Caco-2 (cell line): ENCODE measurements at regions of chr6 and their contacts with region 1.

Region 1: DNA sequence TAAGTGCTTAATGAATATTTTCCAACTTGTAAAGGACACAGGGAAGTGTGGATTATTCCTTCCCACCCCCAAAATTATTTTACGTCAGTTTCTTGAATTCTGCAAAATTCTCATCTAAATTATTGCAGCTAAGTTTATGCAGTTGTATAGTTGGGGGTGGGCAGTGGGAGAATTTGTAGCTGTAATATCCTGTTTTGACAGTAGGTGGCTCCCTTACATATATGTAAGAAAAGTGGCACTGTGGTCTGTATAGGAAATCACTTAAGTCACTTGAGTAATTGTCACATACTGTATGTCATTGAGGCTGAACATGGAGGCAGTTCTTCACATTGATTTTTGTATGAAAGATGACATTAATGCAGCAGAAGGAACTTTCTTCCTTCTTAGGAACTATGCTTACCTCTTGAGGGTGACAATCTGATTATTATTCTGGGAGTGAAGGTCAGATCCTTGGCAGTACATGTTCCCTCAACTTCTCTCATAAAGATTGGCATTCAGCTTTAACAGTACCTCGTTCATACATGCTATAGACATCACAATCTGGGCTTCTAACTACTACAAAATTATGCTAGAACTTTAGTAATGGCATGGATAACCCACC is 14.7 kb upstream of the CFAP206 start:
- DNase-seq: peak in 1 of 2 experiments; percentile 52
- H3K4me3 ChIP-seq: no peak overlapping the region
- H3K4me3 Mint-ChIP-seq: no peak overlapping the region
- H3K27ac Mint-ChIP-seq: no peak overlapping the region
- H3K4me1 ChIP-seq: no peaks in the 10 kb centered on the region
- H3K4me1 Mint-ChIP-seq: no peaks in the 10 kb centered on the region
- H3K27me3 ChIP-seq: no peaks in the 10 kb centered on the region
- H3K27me3 Mint-ChIP-seq: no peaks in the 10 kb centered on the region
- CTCF ChIP-seq: peak; percentile 63 to 64

Region 2: GRCh38 chr6:87139236-87139635 is 253.9 kb before region 1 on chr6:
- CTCF ChIA-PET with region 1: interaction called, 5 read pairs
- POLR2A ChIA-PET with region 1: no interaction called
- intact Hi-C with region 1: loop called (anchors 1 kb)
- DNase-seq: peak in 1 of 2 experiments; percentile 60
- H3K4me3 ChIP-seq: no peak overlapping the region
- H3K4me3 Mint-ChIP-seq: no peak overlapping the region
- H3K27ac Mint-ChIP-seq: no peak overlapping the region
- H3K4me1 ChIP-seq: no peaks in the 10 kb centered on the region
- H3K4me1 Mint-ChIP-seq: no peaks in the 10 kb centered on the region
- H3K27me3 ChIP-seq: no peaks in the 10 kb centered on the region
- H3K27me3 Mint-ChIP-seq: peaks cover 13% of the 10 kb centered on the region
- CTCF ChIP-seq: peak; percentile 61 to 71

Region 3: DNA sequence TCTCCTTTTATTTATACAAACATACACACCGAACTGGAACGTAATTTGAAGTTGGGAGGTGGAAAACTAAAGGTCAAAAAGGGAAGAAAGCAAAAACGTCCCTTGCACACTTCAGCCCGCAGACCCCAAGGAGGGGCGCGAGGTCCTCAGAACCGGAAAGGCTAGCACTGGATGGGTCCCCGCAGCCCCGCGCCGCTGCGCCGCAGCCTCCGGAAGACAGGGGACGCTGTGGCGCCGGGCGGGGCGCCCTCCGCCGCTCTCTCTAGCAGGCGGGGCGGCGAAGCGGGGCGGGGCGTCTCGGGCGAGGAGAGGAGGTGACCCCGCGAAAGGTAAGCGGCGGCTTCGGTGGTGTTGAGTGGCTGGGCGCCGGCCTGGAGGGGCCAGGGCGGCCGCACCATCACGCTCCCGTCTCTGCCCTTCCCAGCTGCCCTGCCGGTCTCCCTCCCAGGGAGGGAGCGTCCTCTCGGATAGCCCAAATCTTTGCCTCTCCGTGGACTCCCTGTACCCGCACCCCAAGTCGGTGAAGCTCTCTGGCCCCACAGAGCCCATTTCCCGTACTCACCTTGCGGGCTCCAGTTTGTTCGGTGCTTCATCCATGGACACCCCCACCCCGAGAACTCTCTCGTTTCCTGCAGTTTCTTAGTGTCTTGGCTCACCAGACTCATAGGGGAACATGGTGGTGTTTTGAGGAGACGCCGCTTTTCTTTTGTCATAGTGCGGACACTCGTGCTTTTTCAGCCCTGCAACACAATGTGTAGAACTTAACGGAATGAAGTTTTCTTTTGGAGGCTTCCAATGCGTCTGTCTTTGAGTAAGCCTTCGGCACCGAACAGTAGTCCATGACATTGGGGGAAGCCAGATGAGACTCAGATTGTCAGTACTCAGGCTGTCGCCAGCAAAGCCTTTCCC is 70.6 kb before region 1 on chr6 and contains the start of gene SMIM8:
- CTCF ChIA-PET with region 1: no interaction called
- POLR2A ChIA-PET with region 1: no interaction called
- intact Hi-C with region 1: loop called (anchors 1 kb)
- DNase-seq: peak; percentile 86 to 92
- H3K4me3 ChIP-seq: peak within 1 kb of the TSS; percentile 91
- H3K4me3 Mint-ChIP-seq: peak within 1 kb of the TSS; percentile 98
- H3K27ac Mint-ChIP-seq: peak within 1 kb of the TSS; percentile 92
- H3K4me1 ChIP-seq: peaks cover 5% of the 10 kb centered on the region; the same call in 1 of the 2 replicates
- H3K4me1 Mint-ChIP-seq: no peaks in the 10 kb centered on the region
- H3K27me3 ChIP-seq: no peaks in the 10 kb centered on the region
- H3K27me3 Mint-ChIP-seq: no peaks in the 10 kb centered on the region
- CTCF ChIP-seq: peak; percentile 84 to 95
- total RNA-seq, gene SMIM8: 8.5 and 8.7 TPM in 2 replicates

Region 4: GRCh38 chr6:87407901-87408720 is 15.0 kb after region 1 on chr6 and contains the start of gene CFAP206:
- CTCF ChIA-PET with region 1: interaction called, 12 read pairs
- POLR2A ChIA-PET with region 1: no interaction called
- intact Hi-C with region 1: no loop called
- DNase-seq: peak; percentile 81 to 84
- H3K4me3 ChIP-seq: peak within 1 kb of the TSS; percentile 96
- H3K4me3 Mint-ChIP-seq: peak within 1 kb of the TSS; percentile 76
- H3K27ac Mint-ChIP-seq: peak within 1 kb of the TSS; percentile 82
- H3K4me1 ChIP-seq: peaks cover 7% of the 10 kb centered on the region; the same call in 1 of the 2 replicates
- H3K4me1 Mint-ChIP-seq: no peaks in the 10 kb centered on the region
- H3K27me3 ChIP-seq: no peaks in the 10 kb centered on the region
- H3K27me3 Mint-ChIP-seq: peaks cover 5% of the 10 kb centered on the region
- CTCF ChIP-seq: peak in 1 of 2 experiments; percentile 18
- total RNA-seq, gene CFAP206: 0.23 TPM in 1 of 2 replicates, not detected in the other

Region 5: GRCh38 chr6:87431273-87431672 is 38.2 kb after region 1 on chr6:
- CTCF ChIA-PET with region 1: no interaction called
- POLR2A ChIA-PET with region 1: no interaction called
- intact Hi-C with region 1: no loop called
- DNase-seq: no peak
- H3K4me3 ChIP-seq: no peak overlapping the region
- H3K4me3 Mint-ChIP-seq: no peak overlapping the region
- H3K27ac Mint-ChIP-seq: no peak overlapping the region
- H3K4me1 ChIP-seq: no peaks in the 10 kb centered on the region
- H3K4me1 Mint-ChIP-seq: no peaks in the 10 kb centered on the region
- H3K27me3 ChIP-seq: no peaks in the 10 kb centered on the region
- H3K27me3 Mint-ChIP-seq: peaks cover 9% of the 10 kb centered on the region
- CTCF ChIP-seq: no peak

Region 6: DNA sequence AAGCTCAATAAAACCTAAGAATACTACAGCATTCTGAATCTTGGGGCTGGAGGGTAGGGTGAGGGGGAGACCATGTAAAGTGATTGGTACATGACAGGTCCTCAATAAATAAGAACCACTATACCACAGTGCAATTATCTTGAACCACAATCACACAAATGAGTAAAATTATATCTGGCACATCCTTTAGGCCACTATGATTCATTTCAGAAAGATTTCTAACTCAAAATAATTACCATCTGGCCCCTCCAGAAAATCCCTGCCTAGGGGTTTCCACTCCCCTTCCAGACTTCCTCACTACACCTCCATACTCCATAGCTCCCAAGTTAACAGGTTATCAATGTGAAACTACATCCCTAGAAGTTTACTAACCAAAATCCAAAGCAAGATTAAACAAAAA is 289.2 kb after region 1 on chr6:
- CTCF ChIA-PET with region 1: no interaction called
- POLR2A ChIA-PET with region 1: no interaction called
- intact Hi-C with region 1: no loop called
- DNase-seq: no peak
- H3K4me3 ChIP-seq: no peak overlapping the region
- H3K4me3 Mint-ChIP-seq: no peak overlapping the region
- H3K27ac Mint-ChIP-seq: no peak overlapping the region
- H3K4me1 ChIP-seq: peaks cover 23% of the 10 kb centered on the region
- H3K4me1 Mint-ChIP-seq: peaks cover 7% of the 10 kb centered on the region
- H3K27me3 ChIP-seq: no peaks in the 10 kb centered on the region
- H3K27me3 Mint-ChIP-seq: no peaks in the 10 kb centered on the region
- CTCF ChIP-seq: no peak